ENCODE measurements at regions of chr9 and their contacts with region 1.

Region 1: DNA sequence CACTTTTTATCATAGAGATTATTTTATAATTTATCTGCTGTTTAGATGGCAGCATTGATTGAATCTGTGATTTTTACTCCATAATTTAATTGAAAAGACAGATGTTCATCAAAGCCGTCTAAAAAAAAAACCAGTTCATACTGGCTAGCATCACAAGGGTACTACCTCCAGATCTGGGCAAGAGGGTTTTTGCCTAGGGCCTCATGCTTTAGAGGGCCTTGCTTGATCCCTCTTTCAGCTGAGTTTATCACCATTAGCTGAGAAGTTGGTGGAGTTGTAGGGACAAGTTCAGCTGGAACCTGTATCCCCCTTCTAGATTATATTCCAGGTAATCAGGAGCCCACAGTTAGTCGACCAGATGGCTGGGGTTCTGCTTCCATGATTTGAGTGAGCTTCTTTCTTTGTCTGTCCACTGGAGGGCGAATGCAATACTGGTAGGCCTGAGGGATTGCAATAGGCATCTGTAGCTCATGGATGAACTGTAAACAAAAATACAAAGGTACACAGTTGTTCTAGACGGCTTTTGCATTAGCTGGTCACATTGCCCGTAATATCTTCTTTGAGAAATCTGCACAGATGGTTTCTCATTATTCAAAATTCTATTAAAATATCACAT is 88.8 kb downstream of the PCSK5 start:
- DNase-seq: no peak
- ATAC-seq: no peak
- H3K4me3 ChIP-seq: no peak overlapping the region
- H3K27ac ChIP-seq: no peak overlapping the region
- H3K4me1 ChIP-seq: peaks cover 4% of the 10 kb centered on the region in 2 donors
- H3K27me3 ChIP-seq: no peaks in the 10 kb centered on the region

Region 2: GRCh38 chr9:76086539-76086938 is 107.3 kb after region 1 on chr9:
- intact Hi-C with region 1: no loop called
- DNase-seq: no peak
- ATAC-seq: no peak
- H3K4me3 ChIP-seq: no peak overlapping the region
- H3K27ac ChIP-seq: no peak overlapping the region
- H3K4me1 ChIP-seq: no peaks in the 10 kb centered on the region
- H3K27me3 ChIP-seq: no peaks in the 10 kb centered on the region

Region 3: GRCh38 chr9:76255781-76256455 is 276.7 kb after region 1 on chr9:
- intact Hi-C with region 1: loop called in 1 of 2 experiments (anchors 10 kb)
- DNase-seq: peak in 1 of 2 donors; percentile 82
- ATAC-seq: peak; percentile 90
- H3K4me3 ChIP-seq: peak overlapping the region in 1 of 2 donors; percentile 34
- H3K27ac ChIP-seq: peak overlapping the region; percentile 53 to 95
- H3K4me1 ChIP-seq: peaks cover 2 to 6% of the 10 kb centered on the region in 2 donors
- H3K27me3 ChIP-seq: no peaks in the 10 kb centered on the region